ENCODE measurements at regions of chr20 and their contacts with region 1.

Region 1: GRCh38 chr20:22887796-22888195 is 147.3 kb upstream of the SSTR4 start:
- DNase-seq: no peak
- H3K4me3 ChIP-seq: no peak overlapping the region
- H3K27ac ChIP-seq: no peak overlapping the region
- H3K4me1 ChIP-seq: no peaks in the 10 kb centered on the region
- H3K27me3 ChIP-seq: no peaks in the 10 kb centered on the region
- CTCF ChIP-seq: no peak

Region 2: GRCh38 chr20:22795871-22796270 is 91.9 kb before region 1 on chr20:
- CTCF ChIA-PET with region 1: no interaction called
- dilution Hi-C with region 1: no loop called
- in situ Hi-C with region 1: no loop called
- intact Hi-C with region 1: no loop called
- DNase-seq: peak; percentile 87
- H3K4me3 ChIP-seq: no peak overlapping the region
- H3K27ac ChIP-seq: peak overlapping the region; percentile 68
- H3K4me1 ChIP-seq: peaks cover 66% of the 10 kb centered on the region
- H3K27me3 ChIP-seq: no peaks in the 10 kb centered on the region
- CTCF ChIP-seq: no peak

Region 3: DNA sequence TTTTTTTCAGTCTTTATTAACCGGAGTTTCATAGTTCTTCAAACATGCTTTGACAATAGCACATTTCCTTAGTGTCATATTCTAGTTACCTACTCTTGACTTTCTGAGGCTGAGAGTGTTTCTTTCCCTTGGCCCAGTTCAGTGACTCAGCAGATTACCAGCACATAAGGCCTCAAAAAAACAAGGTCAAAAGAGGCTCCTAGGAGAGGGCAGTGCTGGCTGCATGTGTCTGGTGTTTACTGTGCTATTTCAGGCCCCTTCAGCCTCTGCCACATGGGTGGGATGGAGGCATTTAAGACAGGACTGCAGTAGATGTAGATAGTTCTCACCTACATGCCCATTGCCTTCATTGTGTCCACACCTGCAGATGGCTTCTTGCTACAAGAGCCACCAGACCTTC is 50.9 kb before region 1 on chr20:
- CTCF ChIA-PET with region 1: no interaction called
- dilution Hi-C with region 1: no loop called
- in situ Hi-C with region 1: no loop called
- intact Hi-C with region 1: no loop called
- DNase-seq: peak; percentile 27
- H3K4me3 ChIP-seq: no peak overlapping the region
- H3K27ac ChIP-seq: no peak overlapping the region
- H3K4me1 ChIP-seq: peaks cover 26% of the 10 kb centered on the region
- H3K27me3 ChIP-seq: no peaks in the 10 kb centered on the region
- CTCF ChIP-seq: no peak

Region 4: DNA sequence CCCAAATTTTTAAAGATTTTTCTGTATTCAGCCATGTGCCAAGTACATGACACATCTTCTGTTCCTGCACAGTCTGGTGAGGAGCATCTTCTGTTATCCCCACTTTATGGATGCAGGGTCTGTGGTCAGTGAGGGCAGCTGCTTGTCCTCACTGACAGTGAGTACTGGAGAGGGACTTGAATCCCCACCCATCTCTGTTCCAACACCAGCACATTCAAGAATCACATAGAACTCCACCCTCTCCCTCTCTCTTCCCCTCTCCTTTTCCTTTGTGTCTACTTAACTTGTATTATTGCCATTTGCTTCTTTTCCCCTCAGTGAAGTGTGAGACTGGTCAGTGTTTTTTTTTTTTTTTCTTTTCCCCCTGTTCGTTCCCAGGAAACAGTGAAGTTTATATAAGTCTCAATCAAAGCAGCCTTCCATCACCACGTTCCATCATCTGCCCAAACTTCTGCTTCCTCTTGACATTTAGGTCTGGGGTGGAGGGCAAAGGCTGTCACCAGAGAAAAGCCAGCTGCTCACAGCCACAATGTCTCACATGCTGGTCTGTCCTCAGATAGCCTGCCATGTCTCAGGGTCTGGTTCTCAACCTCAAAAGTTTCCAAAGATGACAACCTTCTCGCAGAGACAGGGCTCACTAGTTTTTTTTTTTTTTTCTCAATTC is 37.3 kb after region 1 on chr20:
- CTCF ChIA-PET with region 1: no interaction called
- dilution Hi-C with region 1: no loop called
- in situ Hi-C with region 1: no loop called
- intact Hi-C with region 1: no loop called
- DNase-seq: no peak
- H3K4me3 ChIP-seq: no peak overlapping the region
- H3K27ac ChIP-seq: no peak overlapping the region
- H3K4me1 ChIP-seq: peaks cover 17% of the 10 kb centered on the region
- H3K27me3 ChIP-seq: no peaks in the 10 kb centered on the region
- CTCF ChIP-seq: no peak

Region 5: DNA sequence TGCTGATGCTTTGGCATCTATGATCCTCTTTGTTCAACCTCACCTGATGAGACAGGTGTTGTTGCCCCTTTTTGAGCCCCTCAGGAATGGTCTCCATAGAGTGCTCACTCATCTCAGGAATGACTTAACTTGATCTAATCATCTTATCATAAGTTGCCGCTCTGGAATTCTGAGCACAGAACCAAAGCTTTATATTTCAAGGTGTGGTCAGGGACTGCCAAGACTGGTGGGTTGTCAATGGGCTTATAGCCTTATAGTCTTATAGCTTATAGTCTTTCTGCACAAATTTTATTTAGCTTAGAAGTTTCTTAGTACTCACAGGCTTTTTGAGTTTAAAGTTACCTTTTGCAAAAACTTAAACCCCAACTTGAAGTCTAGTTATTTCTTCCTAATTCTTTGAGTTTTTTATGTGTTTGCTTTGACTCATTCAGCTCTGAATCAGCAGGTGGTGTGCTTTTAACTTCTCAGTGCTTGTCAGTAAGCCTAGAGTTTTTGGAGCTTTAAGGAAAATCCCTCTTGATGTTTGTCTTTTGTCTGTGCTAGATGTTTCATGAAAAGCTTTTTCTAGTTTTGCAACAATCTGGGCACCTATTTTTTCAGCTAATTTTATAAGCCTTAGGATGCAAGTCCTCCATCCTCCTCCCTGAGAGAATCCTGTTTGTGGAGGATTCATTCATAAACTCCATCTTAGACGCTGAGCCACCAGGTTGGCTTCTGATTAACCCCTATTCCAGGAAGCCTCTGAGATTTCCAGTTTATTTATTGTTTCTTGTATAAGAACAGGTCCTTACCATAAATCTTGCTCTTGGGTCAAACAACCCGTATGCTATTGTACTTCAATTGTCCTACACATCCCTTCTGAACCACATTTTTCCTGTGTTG is 75.0 kb after region 1 on chr20:
- CTCF ChIA-PET with region 1: no interaction called
- dilution Hi-C with region 1: loop called (anchors 5 kb)
- in situ Hi-C with region 1: no loop called
- intact Hi-C with region 1: no loop called
- DNase-seq: peak; percentile 66
- H3K4me3 ChIP-seq: no peak overlapping the region
- H3K27ac ChIP-seq: no peak overlapping the region
- H3K4me1 ChIP-seq: peaks cover 20% of the 10 kb centered on the region
- H3K27me3 ChIP-seq: no peaks in the 10 kb centered on the region
- CTCF ChIP-seq: no peak

Region 6: DNA sequence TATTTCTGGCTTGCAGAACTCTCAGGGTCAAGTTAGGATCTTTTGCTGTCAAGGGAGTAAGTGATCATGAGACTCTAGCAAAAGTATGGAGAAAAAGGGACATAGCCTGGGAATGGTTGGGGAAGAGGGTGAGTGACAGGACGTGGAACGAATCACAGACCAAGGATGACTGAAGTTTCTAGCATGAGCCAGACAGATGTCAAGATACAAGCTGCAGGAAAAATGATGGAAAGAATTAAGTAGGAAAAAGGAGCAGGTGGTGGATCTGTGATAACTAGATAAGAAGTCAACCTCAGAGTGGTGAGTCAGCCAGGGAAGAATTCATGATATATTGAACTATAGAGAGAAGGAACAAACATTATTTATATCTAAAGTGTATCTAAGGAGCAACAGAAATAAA is 1421.8 kb after region 1 on chr20:
- CTCF ChIA-PET with region 1: no interaction called
- dilution Hi-C with region 1: no loop called
- in situ Hi-C with region 1: no loop called
- intact Hi-C with region 1: no loop called
- DNase-seq: peak; percentile 58
- H3K4me3 ChIP-seq: no peak overlapping the region
- H3K27ac ChIP-seq: no peak overlapping the region
- H3K4me1 ChIP-seq: no peaks in the 10 kb centered on the region
- H3K27me3 ChIP-seq: no peaks in the 10 kb centered on the region
- CTCF ChIP-seq: no peak